Left colon (tissue), 2 donors: ENCODE measurements at regions of chr11 and their contacts with region 1.

Region 1: GRCh38 chr11:84384731-84385130 is 1098.6 kb upstream of the CCDC90B start:
- DNase-seq: peak in 1 of 2 donors; percentile 21
- ATAC-seq: no peak

Region 2: GRCh38 chr11:84069048-84069447 is 315.7 kb before region 1 on chr11:
- intact Hi-C with region 1: no loop called
- DNase-seq: no peak
- ATAC-seq: no peak

Region 3: GRCh38 chr11:84437071-84437980 is 52.6 kb after region 1 on chr11:
- intact Hi-C with region 1: no loop called
- DNase-seq: peak in 1 of 2 donors; percentile 3
- ATAC-seq: peak; percentile 20

Region 4: DNA sequence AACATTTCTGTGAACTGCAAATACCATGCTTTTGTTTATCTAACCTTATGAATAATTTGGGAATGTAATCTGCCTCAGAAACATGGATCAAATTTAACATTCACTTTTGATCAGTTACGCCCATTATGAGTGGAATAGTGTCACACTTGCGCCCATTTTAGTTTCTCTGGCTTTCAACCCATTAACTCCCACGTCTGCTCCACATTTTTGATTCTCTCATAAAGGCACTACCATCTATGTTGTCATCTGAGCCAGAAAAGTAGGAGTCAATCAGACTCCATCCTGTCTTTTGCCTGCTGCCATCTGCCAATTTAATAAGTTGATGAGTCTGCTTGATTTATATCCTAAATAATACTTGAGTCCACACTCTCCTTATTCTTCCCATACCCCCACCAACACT is 151.7 kb after region 1 on chr11:
- intact Hi-C with region 1: loop called in 1 of 2 experiments (anchors 10 kb)
- DNase-seq: no peak
- ATAC-seq: no peak

Region 5: GRCh38 chr11:84930863-84931262 is 546.1 kb after region 1 on chr11:
- intact Hi-C with region 1: no loop called
- DNase-seq: no peak
- ATAC-seq: no peak